Transverse colon (tissue), 4 donors: ENCODE measurements at regions of chr2 and their contacts with region 1.

Region 1: DNA sequence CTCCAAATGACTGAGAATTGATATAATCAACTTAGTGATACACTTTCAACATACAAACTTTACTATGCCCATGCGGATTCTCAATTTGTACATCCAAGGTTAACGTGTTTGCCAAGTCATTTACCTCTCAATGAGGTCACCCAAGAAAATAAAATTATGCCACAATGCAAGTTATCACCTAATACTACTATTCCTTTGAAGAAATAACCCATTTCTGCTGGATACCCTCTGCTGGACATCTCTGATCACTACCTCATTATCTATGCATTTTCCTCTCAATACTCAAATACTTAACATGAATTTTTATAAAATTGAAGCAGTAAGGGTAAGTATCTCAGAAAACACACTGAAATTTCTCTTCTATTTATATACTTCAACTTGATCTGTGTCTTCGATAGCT is 12.7 kb downstream of the HNRNPLL start:
- DNase-seq: no peak
- H3K4me3 ChIP-seq: no peak overlapping the region
- H3K27ac ChIP-seq: peak overlapping the region in 3 of 4 donors; percentile 14 to 98 (median 34)
- H3K4me1 ChIP-seq: peaks cover 3 to 67% (median 11%) of the 10 kb centered on the region in 4 donors
- H3K27me3 ChIP-seq: no peaks in the 10 kb centered on the region
- CTCF ChIP-seq: no peak
- EP300 ChIP-seq: no peak
- POLR2A ChIP-seq: no peak

Region 2: DNA sequence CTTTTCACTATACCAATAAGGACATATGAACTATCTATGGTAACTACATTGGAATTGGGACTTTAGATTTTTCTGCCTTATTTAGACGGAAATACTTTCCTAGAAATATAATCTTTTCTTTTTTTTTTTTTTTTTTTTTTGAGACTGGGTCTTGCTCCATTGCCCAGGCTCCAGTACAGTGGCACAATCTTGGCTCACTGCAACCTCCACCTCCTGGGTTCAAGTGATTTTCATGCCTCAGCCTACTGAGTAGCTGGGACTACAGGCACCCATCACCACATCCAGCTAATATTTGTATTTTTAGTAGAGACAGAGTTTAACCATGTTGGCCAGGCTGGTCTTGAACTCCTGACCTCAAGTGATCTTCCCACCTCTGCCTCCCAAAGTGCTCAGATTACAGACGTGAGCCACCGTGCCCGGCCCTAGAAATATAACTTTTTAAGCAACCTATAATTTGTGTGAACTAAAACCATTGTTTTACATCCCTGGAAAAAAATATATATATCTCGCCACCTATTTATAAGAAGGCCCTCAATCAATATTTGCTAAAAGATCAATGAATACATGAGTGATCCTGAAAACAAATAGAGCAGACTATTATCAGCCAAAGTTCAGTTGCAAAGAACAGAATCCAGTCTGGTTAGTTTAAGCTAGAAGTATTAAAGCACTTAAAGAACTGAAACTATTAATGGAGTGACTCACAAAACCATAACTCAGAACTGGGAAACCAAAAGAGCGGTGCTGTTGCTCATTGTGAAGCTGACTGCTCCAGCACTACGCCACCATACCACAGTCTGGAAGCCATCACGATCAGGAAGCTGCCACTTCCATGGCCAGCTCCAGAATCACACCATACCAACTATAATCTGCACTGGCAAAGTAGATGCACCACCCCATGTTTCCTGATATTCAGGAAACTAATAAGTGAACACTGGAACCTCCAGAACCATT is 21.1 kb after region 1 on chr2:
- in situ Hi-C with region 1: no loop called
- intact Hi-C with region 1: no loop called
- DNase-seq: no peak
- H3K4me3 ChIP-seq: no peak overlapping the region
- H3K27ac ChIP-seq: no peak overlapping the region
- H3K4me1 ChIP-seq: no peaks in the 10 kb centered on the region
- H3K27me3 ChIP-seq: no peaks in the 10 kb centered on the region
- CTCF ChIP-seq: no peak
- EP300 ChIP-seq: no peak
- POLR2A ChIP-seq: no peak

Region 3: DNA sequence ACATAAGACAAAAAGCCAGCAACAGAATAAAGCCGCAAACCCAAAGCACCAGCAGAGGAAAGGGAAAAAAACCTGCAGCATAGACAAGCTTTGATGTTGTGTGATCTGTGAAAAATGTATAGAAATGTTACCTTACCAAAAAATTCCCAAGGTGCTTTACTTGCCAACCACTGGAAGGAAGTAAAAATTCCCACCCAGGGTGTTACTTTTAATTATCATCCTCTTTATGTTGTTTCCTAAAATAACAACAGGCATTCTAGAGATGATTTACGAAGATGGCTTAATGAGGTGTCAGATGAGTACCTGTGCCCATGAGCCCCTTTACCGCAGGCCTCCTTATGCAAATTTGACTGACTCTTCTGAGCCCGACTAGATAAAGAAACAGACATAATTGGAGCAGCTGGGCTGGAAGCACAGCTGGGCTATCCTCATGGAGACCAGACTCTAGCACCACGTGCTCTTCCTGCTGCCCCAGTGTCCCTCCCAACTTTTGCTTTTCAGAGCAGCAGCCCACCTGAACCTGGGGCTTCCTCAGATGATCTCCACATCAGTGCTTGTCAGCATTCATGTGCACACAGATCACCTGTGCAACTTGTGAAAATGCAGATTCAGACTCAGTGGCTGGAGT is 119.6 kb after region 1 on chr2:
- in situ Hi-C with region 1: loop called in 1 of 4 experiments (anchors 5 kb)
- intact Hi-C with region 1: no loop called
- DNase-seq: no peak
- H3K4me3 ChIP-seq: no peak overlapping the region
- H3K27ac ChIP-seq: no peak overlapping the region
- H3K4me1 ChIP-seq: peaks cover 0 to 4% (median 0%) of the 10 kb centered on the region in 4 donors
- H3K27me3 ChIP-seq: no peaks in the 10 kb centered on the region
- CTCF ChIP-seq: no peak
- EP300 ChIP-seq: no peak
- POLR2A ChIP-seq: no peak